Activated naive CD4-positive, alpha-beta T cell treated with anti-CD3 and anti-CD28 coated beads for 36 hours (primary cell): ENCODE measurements at regions of chr3 and their contacts with region 1.

Region 1: GRCh38 chr3:49539659-49540560 is 14.4 kb upstream of the BSN start:
- DNase-seq: peak; percentile 93
- H3K4me3 Mint-ChIP-seq: peak overlapping the region; percentile 69
- H3K27ac Mint-ChIP-seq: no peak overlapping the region
- H3K4me1 Mint-ChIP-seq: peaks cover 2% of the 10 kb centered on the region
- H3K27me3 Mint-ChIP-seq: no peaks in the 10 kb centered on the region

Region 2: GRCh38 chr3:49553692-49554632 is 14.1 kb after region 1 on chr3 and contains the start of gene BSN:
- CTCF ChIA-PET with region 1: interaction called, 43 read pairs
- intact Hi-C with region 1: no loop called
- DNase-seq: peak; percentile 88
- H3K4me3 Mint-ChIP-seq: peak within 1 kb of the TSS; percentile 87
- H3K27ac Mint-ChIP-seq: no peak within 1 kb of the TSS
- H3K4me1 Mint-ChIP-seq: peaks cover 12% of the 10 kb centered on the region
- H3K27me3 Mint-ChIP-seq: peaks cover 40% of the 10 kb centered on the region
- total RNA-seq, gene BSN: 0.12 to 0.20 TPM

Region 3: GRCh38 chr3:49566312-49566711 is 26.4 kb after region 1 on chr3:
- CTCF ChIA-PET with region 1: interaction called, 10 read pairs
- intact Hi-C with region 1: no loop called
- DNase-seq: no peak
- H3K4me3 Mint-ChIP-seq: no peak overlapping the region
- H3K27ac Mint-ChIP-seq: no peak overlapping the region
- H3K4me1 Mint-ChIP-seq: no peaks in the 10 kb centered on the region
- H3K27me3 Mint-ChIP-seq: no peaks in the 10 kb centered on the region

Region 4: GRCh38 chr3:49602877-49603411 is 63.0 kb after region 1 on chr3:
- CTCF ChIA-PET with region 1: no interaction called
- intact Hi-C with region 1: loop called (anchors 5 kb)
- DNase-seq: peak; percentile 80
- H3K4me3 Mint-ChIP-seq: no peak overlapping the region
- H3K27ac Mint-ChIP-seq: peak overlapping the region; percentile 35
- H3K4me1 Mint-ChIP-seq: peaks cover 19% of the 10 kb centered on the region
- H3K27me3 Mint-ChIP-seq: no peaks in the 10 kb centered on the region

Region 5: DNA sequence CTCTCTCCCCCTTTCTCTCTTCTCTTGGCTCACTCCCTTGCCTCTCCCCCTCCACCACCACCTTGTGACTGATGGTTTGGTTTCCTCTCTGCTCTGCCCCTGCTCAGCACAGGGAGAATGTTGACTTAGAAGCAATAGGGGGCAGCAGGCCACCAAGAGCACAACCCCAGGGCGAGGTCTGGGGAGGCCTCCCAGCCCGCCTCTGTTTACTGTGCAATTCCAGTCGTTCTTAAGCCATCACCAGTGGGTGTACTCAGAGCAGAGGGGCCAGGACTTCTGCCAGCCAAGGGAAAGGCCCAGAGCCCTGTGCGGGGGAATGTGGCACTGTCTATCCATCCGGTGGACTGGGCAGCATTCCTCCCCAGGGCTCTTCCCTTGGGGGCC is 128.5 kb after region 1 on chr3:
- CTCF ChIA-PET with region 1: interaction called, 171 read pairs
- intact Hi-C with region 1: loop called (anchors 1 kb)
- DNase-seq: no peak
- H3K4me3 Mint-ChIP-seq: no peak overlapping the region
- H3K27ac Mint-ChIP-seq: no peak overlapping the region
- H3K4me1 Mint-ChIP-seq: peaks cover 10% of the 10 kb centered on the region
- H3K27me3 Mint-ChIP-seq: no peaks in the 10 kb centered on the region

Region 6: GRCh38 chr3:49703443-49703927 is 163.6 kb after region 1 on chr3:
- CTCF ChIA-PET with region 1: interaction called, 13 read pairs
- intact Hi-C with region 1: no loop called
- DNase-seq: peak; percentile 78
- H3K4me3 Mint-ChIP-seq: no peak overlapping the region
- H3K27ac Mint-ChIP-seq: no peak overlapping the region
- H3K4me1 Mint-ChIP-seq: no peaks in the 10 kb centered on the region
- H3K27me3 Mint-ChIP-seq: no peaks in the 10 kb centered on the region

Region 7: DNA sequence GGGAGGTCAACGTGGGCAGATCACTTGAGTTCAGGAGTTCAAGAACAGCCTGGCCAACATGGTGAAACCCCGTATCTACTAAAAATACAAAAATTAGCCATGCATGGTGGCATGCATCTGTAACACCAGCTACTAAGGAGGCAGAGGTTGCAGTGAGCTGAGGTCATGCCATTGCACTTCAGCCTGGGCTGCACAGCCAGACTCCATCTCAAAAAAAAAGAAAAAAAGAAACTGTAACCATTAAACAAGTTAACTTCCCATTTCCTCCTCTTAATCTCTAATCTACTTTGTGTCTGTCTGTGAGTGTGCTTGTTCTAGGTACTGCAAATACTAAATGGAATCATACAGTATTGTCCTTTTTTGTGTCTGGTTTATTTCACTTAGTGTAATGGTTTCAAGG is 402.7 kb after region 1 on chr3:
- CTCF ChIA-PET with region 1: no interaction called
- intact Hi-C with region 1: no loop called
- DNase-seq: no peak
- H3K4me3 Mint-ChIP-seq: peak overlapping the region; percentile 11
- H3K27ac Mint-ChIP-seq: no peak overlapping the region
- H3K4me1 Mint-ChIP-seq: peaks cover 39% of the 10 kb centered on the region
- H3K27me3 Mint-ChIP-seq: no peaks in the 10 kb centered on the region

Region 8: DNA sequence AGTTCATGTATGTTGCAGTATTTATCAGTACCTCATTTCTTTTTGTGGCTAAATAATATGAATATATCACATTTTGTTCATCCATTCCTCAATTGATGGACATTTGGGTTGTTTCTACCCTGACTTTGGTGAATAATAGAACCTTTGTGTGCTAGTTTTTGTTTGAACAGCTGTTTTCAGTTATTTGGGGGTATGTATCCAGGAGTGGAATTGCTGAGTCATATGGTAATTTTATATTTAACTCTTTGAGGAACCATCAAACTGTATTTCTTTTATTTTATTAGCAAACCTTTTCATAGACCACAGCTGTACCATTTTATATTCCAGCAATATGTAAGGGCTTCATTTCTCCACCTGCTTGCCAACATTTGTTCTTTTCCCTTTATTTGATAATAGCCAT is 510.5 kb after region 1 on chr3:
- CTCF ChIA-PET with region 1: no interaction called
- intact Hi-C with region 1: no loop called
- DNase-seq: no peak
- H3K4me3 Mint-ChIP-seq: no peak overlapping the region
- H3K27ac Mint-ChIP-seq: no peak overlapping the region
- H3K4me1 Mint-ChIP-seq: peaks cover 7% of the 10 kb centered on the region
- H3K27me3 Mint-ChIP-seq: no peaks in the 10 kb centered on the region